ENCODE measurements at regions of chr1 and their contacts with region 1.

Region 1: GRCh38 chr1:16366722-16367257 is at the start of gene SZRD1:
- DNase-seq: peak; percentile 94 to 99 (median 98)
- H3K4me3 ChIP-seq: peak within 1 kb of the TSS; percentile 85
- H3K4me3 Mint-ChIP-seq: peak within 1 kb of the TSS; percentile 95 to 99 (median 98)
- H3K27ac ChIP-seq: peak within 1 kb of the TSS; percentile 99
- H3K27ac Mint-ChIP-seq: peak within 1 kb of the TSS; percentile 99 to 100 (median 99)
- H3K4me1 ChIP-seq: peaks cover 42% of the 10 kb centered on the region
- H3K4me1 Mint-ChIP-seq: peaks cover 22 to 52% (median 32%) of the 10 kb centered on the region in 4 donors
- H3K27me3 ChIP-seq: no peaks in the 10 kb centered on the region
- H3K27me3 Mint-ChIP-seq: no peaks in the 10 kb centered on the region
- total RNA-seq, gene SZRD1: 79.1 to 81.0 TPM

Region 2: DNA sequence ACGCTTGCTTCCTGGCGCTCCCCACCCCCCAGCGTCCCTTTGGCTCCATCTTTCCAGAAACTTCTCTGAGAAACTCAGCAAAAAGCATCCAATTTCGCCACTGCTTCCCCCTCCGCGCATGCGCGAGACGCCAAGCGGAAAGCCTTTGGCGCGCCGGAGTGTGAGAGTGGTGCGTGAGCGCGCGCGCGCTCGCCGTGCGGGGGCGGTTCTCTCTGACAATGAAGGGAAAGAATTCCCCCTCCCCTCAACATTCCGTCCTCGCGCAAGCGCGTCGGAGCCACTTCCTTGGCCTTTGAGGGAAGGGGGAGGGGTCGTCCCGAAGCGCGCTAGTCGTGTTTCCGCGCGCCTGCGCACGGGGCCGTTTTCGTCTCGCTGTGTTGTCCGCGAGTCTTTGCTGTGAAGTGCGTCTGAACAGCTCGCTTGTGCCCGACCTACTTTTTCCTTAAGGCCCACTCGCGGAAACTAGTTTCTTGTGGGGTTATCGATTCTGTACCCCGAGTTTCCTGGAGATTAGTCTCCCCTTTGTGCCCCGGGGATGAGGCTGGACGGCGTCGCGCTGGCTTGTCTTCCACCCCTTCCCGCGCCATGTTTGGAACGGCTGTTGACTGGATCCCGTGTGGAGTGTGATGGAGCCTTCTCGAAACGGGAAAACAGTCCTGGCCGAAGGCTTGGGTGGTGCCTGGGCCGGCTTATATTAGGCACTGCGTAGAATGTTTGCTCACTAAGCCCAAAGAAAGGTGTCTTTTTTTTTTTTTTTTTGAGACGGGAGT is 530.9 kb before region 1 on chr1:
- CTCF ChIA-PET with region 1: no interaction called
- POLR2A ChIA-PET with region 1: interaction called, 5 read pairs
- intact Hi-C with region 1: loop called (anchors 2 kb)
- DNase-seq: peak; percentile 97 to 99 (median 99)
- H3K4me3 ChIP-seq: peak overlapping the region; percentile 86 to 88
- H3K4me3 Mint-ChIP-seq: peak overlapping the region; percentile 92 to 98 (median 96)
- H3K27ac ChIP-seq: peak overlapping the region; percentile 99
- H3K27ac Mint-ChIP-seq: peak overlapping the region; percentile 98 to 100 (median 99)
- H3K4me1 ChIP-seq: peaks cover 16% of the 10 kb centered on the region
- H3K4me1 Mint-ChIP-seq: peaks cover 8 to 47% (median 14%) of the 10 kb centered on the region in 4 donors
- H3K27me3 ChIP-seq: no peaks in the 10 kb centered on the region
- H3K27me3 Mint-ChIP-seq: no peaks in the 10 kb centered on the region

Region 3: GRCh38 chr1:16078925-16079656 is 287.7 kb before region 1 on chr1:
- CTCF ChIA-PET with region 1: interaction called, 18 read pairs
- POLR2A ChIA-PET with region 1: interaction called, 4 read pairs
- intact Hi-C with region 1: loop called (anchors 1 kb)
- DNase-seq: peak; percentile 73 to 76 (median 75)
- H3K4me3 ChIP-seq: peak overlapping the region in 1 of 2 donors; percentile 7
- H3K4me3 Mint-ChIP-seq: peak overlapping the region; percentile 76 to 92 (median 84)
- H3K27ac ChIP-seq: no peak overlapping the region
- H3K27ac Mint-ChIP-seq: peak overlapping the region in 6 of 7 donors; percentile 31 to 91 (median 58)
- H3K4me1 ChIP-seq: peaks cover 14% of the 10 kb centered on the region
- H3K4me1 Mint-ChIP-seq: peaks cover 8 to 18% (median 12%) of the 10 kb centered on the region in 4 donors
- H3K27me3 ChIP-seq: peaks cover 3% of the 10 kb centered on the region
- H3K27me3 Mint-ChIP-seq: peaks cover 1 to 4% of the 10 kb centered on the region in 2 donors

Region 4: DNA sequence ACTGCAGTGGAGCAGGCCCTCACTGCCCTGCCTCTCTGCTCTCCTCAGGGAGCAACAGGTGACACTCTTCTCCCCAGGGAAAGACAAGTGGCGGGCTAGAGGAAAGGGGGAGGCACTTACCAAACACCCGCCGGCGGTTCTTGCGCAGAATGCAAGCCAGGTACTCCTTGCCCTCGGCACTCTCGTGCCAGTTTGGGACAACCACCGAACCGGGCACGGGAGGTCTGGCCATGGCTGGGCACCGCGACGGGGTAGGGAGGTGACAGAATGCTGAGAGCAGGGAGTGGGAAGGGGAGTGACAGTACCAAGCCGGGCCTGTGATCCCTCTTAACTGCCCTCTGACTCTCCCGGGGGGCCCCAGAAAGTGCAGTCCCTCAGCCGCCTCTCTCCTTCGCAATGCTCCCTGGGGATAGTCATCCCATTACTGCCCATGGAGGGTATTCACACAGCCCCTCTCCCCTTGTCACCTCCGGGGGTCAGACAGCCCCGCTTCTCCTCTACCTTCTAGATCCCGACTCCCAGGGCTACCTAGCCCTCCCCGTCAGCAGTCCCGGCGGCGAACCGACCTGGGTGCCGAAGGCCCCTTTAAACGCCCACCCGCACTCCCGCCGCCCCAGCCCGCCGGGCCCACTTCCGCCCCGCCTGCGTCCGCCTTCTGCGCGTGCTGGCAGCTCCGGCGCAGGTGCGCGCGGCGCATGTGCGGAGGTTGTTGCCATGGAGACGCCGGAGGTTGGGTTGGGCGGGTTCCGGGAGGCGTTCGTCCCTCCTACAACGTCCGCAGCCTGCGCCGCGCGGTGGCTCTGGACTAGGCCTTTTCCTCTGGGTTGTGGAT is 130.1 kb before region 1 on chr1 and contains the start of gene CPLANE2:
- CTCF ChIA-PET with region 1: interaction called, 4 read pairs
- POLR2A ChIA-PET with region 1: interaction called, 7 read pairs
- intact Hi-C with region 1: loop called (anchors 2 kb)
- DNase-seq: peak; percentile 93 to 96 (median 94)
- H3K4me3 ChIP-seq: peak within 1 kb of the TSS; percentile 68 to 72
- H3K4me3 Mint-ChIP-seq: peak within 1 kb of the TSS; percentile 83 to 97 (median 91)
- H3K27ac ChIP-seq: peak within 1 kb of the TSS; percentile 82
- H3K27ac Mint-ChIP-seq: peak within 1 kb of the TSS; percentile 94 to 99 (median 97)
- H3K4me1 ChIP-seq: peaks cover 24% of the 10 kb centered on the region
- H3K4me1 Mint-ChIP-seq: peaks cover 12 to 23% (median 18%) of the 10 kb centered on the region in 4 donors
- H3K27me3 ChIP-seq: no peaks in the 10 kb centered on the region
- H3K27me3 Mint-ChIP-seq: no peaks in the 10 kb centered on the region
- total RNA-seq, gene CPLANE2: 11.5 to 13.6 TPM

Region 5: GRCh38 chr1:16386454-16387113 is 19.8 kb after region 1 on chr1:
- CTCF ChIA-PET with region 1: interaction called, 6 read pairs
- POLR2A ChIA-PET with region 1: interaction called, 19 read pairs
- intact Hi-C with region 1: loop called (anchors 2 kb)
- DNase-seq: no peak
- H3K4me3 ChIP-seq: no peak overlapping the region
- H3K4me3 Mint-ChIP-seq: peak overlapping the region; percentile 58 to 88 (median 81)
- H3K27ac ChIP-seq: peak overlapping the region; percentile 58
- H3K27ac Mint-ChIP-seq: peak overlapping the region; percentile 61 to 95 (median 68)
- H3K4me1 ChIP-seq: peaks cover 70% of the 10 kb centered on the region
- H3K4me1 Mint-ChIP-seq: peaks cover 49 to 78% (median 66%) of the 10 kb centered on the region in 4 donors
- H3K27me3 ChIP-seq: no peaks in the 10 kb centered on the region
- H3K27me3 Mint-ChIP-seq: no peaks in the 10 kb centered on the region

Region 6: DNA sequence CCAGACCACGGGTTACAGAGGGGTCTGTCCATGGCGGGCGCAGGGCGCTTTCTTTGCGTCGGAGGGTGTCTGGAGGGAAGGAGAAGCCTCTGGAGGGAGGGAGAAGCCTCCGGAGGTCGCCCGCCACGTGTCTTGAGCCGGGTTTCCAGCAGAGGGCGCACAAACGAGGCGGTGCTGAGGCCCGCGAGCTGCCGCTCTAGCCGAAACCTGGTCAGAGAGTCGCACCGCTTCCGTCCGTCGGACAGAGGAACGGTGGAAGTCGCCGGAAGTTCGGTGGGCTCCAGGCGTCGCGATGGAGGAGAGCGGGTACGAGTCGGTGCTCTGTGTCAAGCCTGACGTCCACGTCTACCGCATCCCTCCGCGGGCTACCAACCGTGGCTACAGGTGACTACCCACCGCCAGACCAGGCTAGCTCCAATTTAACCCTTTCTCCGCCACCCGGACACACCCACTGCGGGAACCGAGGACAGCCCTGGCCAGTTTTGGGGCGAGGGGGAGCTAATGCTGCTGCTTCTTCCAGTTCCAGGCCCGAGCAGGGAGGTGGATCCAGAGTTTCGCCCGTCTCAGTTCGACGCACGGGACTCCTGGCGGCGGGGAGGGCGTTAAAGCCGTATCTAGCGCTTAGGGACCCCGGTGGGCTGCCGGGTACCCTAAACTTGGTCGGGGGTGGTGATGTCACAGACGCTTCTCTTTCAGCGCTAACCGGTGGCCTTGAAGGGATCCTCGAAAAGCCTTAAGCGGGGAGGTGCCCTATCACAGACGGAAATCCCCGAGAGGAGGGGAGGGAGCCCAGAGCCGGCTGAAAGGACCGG is 73.9 kb after region 1 on chr1 and contains the start of gene NECAP2:
- CTCF ChIA-PET with region 1: interaction called, 4 read pairs
- POLR2A ChIA-PET with region 1: interaction called, 33 read pairs
- intact Hi-C with region 1: loop called (anchors 1 kb)
- DNase-seq: peak; percentile 87 to 89 (median 88)
- H3K4me3 ChIP-seq: peak within 1 kb of the TSS; percentile 86 to 97
- H3K4me3 Mint-ChIP-seq: peak within 1 kb of the TSS; percentile 91 to 99 (median 96)
- H3K27ac ChIP-seq: peak within 1 kb of the TSS; percentile 100
- H3K27ac Mint-ChIP-seq: peak within 1 kb of the TSS; percentile 94 to 99 (median 96)
- H3K4me1 ChIP-seq: peaks cover 44% of the 10 kb centered on the region
- H3K4me1 Mint-ChIP-seq: peaks cover 20 to 50% (median 34%) of the 10 kb centered on the region in 4 donors
- H3K27me3 ChIP-seq: no peaks in the 10 kb centered on the region
- H3K27me3 Mint-ChIP-seq: no peaks in the 10 kb centered on the region
- total RNA-seq, gene NECAP2: 154 to 165 TPM

Region 7: DNA sequence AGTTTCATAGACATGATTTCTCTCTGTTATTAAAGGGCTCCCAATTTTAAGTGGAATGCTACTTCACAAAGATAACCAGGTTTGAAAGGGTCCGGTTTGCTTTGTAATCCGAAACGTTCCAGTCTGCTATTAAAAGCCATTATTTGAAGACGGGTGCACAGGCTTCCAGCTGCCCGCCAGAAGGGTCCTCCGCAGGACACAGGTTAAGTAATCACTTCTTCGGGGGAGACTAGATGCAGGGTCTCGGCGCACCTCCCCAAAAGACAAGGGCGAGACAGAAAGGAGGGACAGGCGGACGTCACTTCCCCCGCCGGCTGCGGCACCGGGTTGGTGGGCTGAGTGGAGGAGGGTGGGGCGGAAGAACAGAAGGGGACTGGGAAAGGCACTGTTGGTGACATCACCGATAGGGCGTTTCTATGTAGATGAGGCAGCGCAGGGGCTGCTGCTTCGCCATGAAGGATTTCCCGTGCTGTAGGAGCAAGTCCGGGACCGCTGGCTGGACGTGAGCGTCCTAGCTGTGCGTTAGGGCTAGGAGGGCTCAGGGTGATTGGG is 537.8 kb after region 1 on chr1:
- CTCF ChIA-PET with region 1: no interaction called
- POLR2A ChIA-PET with region 1: interaction called, 6 read pairs
- intact Hi-C with region 1: loop called (anchors 5 kb)
- DNase-seq: peak; percentile 99 to 100 (median 100)
- H3K4me3 ChIP-seq: peak overlapping the region; percentile 38 to 66
- H3K4me3 Mint-ChIP-seq: no peak overlapping the region
- H3K27ac ChIP-seq: peak overlapping the region; percentile 97
- H3K27ac Mint-ChIP-seq: no peak overlapping the region
- H3K4me1 ChIP-seq: peaks cover 35% of the 10 kb centered on the region
- H3K4me1 Mint-ChIP-seq: peaks cover 12 to 39% (median 21%) of the 10 kb centered on the region in 4 donors
- H3K27me3 ChIP-seq: no peaks in the 10 kb centered on the region
- H3K27me3 Mint-ChIP-seq: no peaks in the 10 kb centered on the region